Activated naive CD4-positive, alpha-beta T cell treated with anti-CD3 and anti-CD28 coated beads for 36 hours (primary cell): ENCODE measurements at regions of chr5 and their contacts with region 1.

Region 1: GRCh38 chr5:157026789-157027424 is 32.0 kb downstream of the HAVCR1 start:
- DNase-seq: peak; percentile 34
- H3K4me3 Mint-ChIP-seq: no peak overlapping the region
- H3K27ac Mint-ChIP-seq: no peak overlapping the region
- H3K4me1 Mint-ChIP-seq: peaks cover 34% of the 10 kb centered on the region
- H3K27me3 Mint-ChIP-seq: no peaks in the 10 kb centered on the region

Region 2: DNA sequence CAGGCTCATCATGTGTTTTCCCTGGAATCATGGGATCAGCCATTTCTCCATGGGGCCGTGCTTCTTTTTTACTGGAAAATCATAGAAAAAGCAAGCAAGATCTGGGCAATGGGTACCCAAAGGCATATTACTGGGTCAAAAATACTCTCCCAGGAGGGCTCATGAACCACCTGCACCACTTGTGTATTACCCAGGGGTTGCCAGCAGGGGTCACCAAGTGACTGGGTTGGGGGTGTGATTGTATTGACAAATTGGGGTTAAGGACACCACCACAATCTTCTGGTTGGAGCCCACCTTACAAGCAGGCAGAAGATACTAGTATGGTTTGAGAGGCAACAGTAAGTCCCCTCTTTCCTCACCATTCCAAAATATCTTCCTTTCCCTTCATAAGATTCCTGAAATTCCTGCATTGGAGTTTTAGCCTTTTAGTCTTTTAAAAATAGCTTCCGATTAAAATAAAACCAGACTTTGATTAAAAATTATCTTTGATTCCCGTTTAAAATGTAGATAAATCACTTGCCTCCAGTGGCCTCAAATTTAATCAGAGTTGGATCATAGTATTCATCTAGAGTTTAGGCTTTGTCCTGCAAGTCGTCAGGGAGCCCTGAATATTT is 1410.0 kb before region 1 on chr5:
- CTCF ChIA-PET with region 1: no interaction called
- intact Hi-C with region 1: loop called (anchors 5 kb)
- DNase-seq: peak; percentile 69
- H3K4me3 Mint-ChIP-seq: no peak overlapping the region
- H3K27ac Mint-ChIP-seq: no peak overlapping the region
- H3K4me1 Mint-ChIP-seq: no peaks in the 10 kb centered on the region
- H3K27me3 Mint-ChIP-seq: peaks cover 32% of the 10 kb centered on the region

Region 3: GRCh38 chr5:156402387-156402921 is 624.5 kb before region 1 on chr5:
- CTCF ChIA-PET with region 1: no interaction called
- intact Hi-C with region 1: loop called (anchors 5 kb)
- DNase-seq: peak; percentile 78
- H3K4me3 Mint-ChIP-seq: no peak overlapping the region
- H3K27ac Mint-ChIP-seq: no peak overlapping the region
- H3K4me1 Mint-ChIP-seq: peaks cover 12% of the 10 kb centered on the region
- H3K27me3 Mint-ChIP-seq: peaks cover 8% of the 10 kb centered on the region

Region 4: DNA sequence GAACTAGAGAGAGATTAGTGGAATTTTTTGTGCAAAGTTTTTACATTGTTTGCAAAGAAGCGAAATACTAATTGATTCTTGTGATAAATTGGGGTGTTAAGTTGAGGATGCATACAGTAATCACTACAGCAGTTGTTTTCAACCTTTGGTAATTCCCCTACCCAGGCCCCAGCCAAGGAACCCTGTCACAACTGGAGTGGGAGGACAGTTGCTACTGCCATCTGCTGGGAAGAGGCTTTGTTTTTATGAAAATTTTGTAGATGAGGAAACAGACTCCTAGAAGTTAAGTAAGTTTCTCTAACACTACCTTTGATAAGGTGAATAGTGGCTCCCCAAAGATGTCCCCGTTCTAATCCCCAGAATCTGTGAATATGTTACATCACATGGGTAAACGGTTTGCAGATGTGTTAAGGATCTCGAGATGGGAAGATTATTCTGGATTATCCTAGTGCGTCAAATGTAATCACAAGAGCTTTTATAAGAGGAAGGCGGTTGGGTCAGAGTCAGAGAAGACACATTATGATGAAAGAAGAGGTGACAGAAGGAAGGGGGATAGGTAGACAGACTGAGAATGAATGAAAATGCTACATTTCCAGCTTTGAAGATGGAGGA is 210.8 kb before region 1 on chr5:
- CTCF ChIA-PET with region 1: interaction called, 6 read pairs
- intact Hi-C with region 1: loop called (anchors 5 kb)
- DNase-seq: peak; percentile 77
- H3K4me3 Mint-ChIP-seq: no peak overlapping the region
- H3K27ac Mint-ChIP-seq: peak overlapping the region; percentile 28
- H3K4me1 Mint-ChIP-seq: peaks cover 7% of the 10 kb centered on the region
- H3K27me3 Mint-ChIP-seq: no peaks in the 10 kb centered on the region

Region 5: GRCh38 chr5:156892223-156892622 is 134.7 kb before region 1 on chr5:
- CTCF ChIA-PET with region 1: interaction called, 5 read pairs
- intact Hi-C with region 1: loop called (anchors 1 kb)
- DNase-seq: no peak
- H3K4me3 Mint-ChIP-seq: no peak overlapping the region
- H3K27ac Mint-ChIP-seq: peak overlapping the region; percentile 78
- H3K4me1 Mint-ChIP-seq: peaks cover 41% of the 10 kb centered on the region
- H3K27me3 Mint-ChIP-seq: no peaks in the 10 kb centered on the region

Region 6: GRCh38 chr5:156942064-156942463 is 84.8 kb before region 1 on chr5:
- CTCF ChIA-PET with region 1: no interaction called
- intact Hi-C with region 1: loop called (anchors 1 kb)
- DNase-seq: peak; percentile 33
- H3K4me3 Mint-ChIP-seq: no peak overlapping the region
- H3K27ac Mint-ChIP-seq: peak overlapping the region; percentile 90
- H3K4me1 Mint-ChIP-seq: peaks cover 21% of the 10 kb centered on the region
- H3K27me3 Mint-ChIP-seq: no peaks in the 10 kb centered on the region

Region 7: DNA sequence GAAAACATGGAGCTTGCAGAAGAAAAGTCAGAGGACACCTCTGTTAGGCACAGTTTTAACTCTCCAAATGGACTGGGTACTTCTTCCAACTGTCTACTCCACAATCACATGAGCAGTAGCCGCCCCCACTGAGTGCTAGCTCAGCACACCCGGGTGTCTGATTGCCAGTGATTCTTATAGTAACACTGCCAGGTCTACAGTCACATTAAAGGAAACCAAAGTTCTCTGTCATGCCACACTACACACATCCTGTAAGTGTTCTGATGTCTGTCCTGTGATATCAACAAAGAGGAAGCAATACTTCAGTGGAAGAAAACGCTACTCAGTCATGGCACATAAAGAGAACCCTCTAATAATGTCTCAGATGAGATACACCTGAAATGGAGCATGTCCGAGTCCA is 82.1 kb after region 1 on chr5 and contains the start of gene HAVCR2:
- CTCF ChIA-PET with region 1: interaction called, 3 read pairs
- intact Hi-C with region 1: loop called (anchors 1 kb)
- DNase-seq: peak; percentile 87
- H3K4me3 Mint-ChIP-seq: peak within 1 kb of the TSS; percentile 65
- H3K27ac Mint-ChIP-seq: peak within 1 kb of the TSS; percentile 87
- H3K4me1 Mint-ChIP-seq: peaks cover 40% of the 10 kb centered on the region
- H3K27me3 Mint-ChIP-seq: no peaks in the 10 kb centered on the region
- total RNA-seq, gene HAVCR2: 10.2 to 10.4 TPM